Activated B cell treated with CpG ODN at 0.5 μM for 24 hours (primary cell): ENCODE measurements at regions of chrX and their contacts with region 1.

Region 1: GRCh38 chrX:111098874-111099273 is 2.9 kb downstream of the PAK3 start:
- DNase-seq: no peak
- ATAC-seq: peak; percentile 61
- H3K4me3 Mint-ChIP-seq: peak overlapping the region; percentile 60
- H3K27ac Mint-ChIP-seq: no peak overlapping the region
- H3K4me1 Mint-ChIP-seq: peaks cover 18% of the 10 kb centered on the region
- H3K27me3 Mint-ChIP-seq: peaks cover 9% of the 10 kb centered on the region
- CTCF ChIP-seq: no peak

Region 2: DNA sequence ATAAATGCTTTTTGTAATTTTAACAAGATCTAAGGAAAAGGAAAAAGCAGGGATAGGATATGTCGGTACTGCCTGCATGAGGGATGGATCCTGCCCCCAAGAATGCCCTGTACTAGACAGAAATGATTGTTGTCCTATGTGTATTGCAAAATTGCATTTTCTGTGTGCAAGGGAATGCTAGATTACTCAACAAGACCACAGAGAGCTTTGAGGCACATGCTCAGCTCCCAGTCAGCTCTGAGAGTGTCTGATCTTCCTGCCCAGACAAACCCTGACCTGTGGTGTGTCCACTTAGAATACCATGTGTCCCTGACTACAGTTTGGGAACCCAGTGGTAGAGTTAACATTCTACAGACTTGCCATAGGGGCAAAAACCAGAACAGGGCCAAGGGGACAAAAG is 132.0 kb before region 1 on chrX:
- CTCF ChIA-PET with region 1: no interaction called
- POLR2A ChIA-PET with region 1: no interaction called
- intact Hi-C with region 1: no loop called
- DNase-seq: no peak
- ATAC-seq: no peak
- H3K4me3 Mint-ChIP-seq: no peak overlapping the region
- H3K27ac Mint-ChIP-seq: no peak overlapping the region
- H3K4me1 Mint-ChIP-seq: no peaks in the 10 kb centered on the region
- H3K27me3 Mint-ChIP-seq: no peaks in the 10 kb centered on the region
- CTCF ChIP-seq: no peak

Region 3: DNA sequence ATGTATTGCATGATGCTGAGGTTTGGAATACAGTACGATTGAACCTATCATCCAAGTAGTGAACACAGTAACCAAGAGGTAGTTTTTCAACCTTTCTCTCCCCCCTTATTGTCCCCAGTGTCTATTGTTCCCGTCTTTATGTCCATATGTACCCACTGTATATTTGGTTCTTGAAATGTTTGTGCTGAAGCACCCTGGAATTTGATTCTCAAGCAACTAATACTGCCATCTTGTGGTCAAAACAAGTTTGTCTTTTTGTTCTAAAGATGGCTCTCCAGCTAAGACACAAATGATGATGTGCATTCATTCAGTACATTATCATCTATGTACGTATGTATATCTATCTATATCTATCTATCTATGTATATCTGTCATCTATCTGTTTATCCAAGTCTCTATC is 346.6 kb after region 1 on chrX:
- CTCF ChIA-PET with region 1: no interaction called
- POLR2A ChIA-PET with region 1: no interaction called
- intact Hi-C with region 1: loop called (anchors 5 kb)
- DNase-seq: no peak
- ATAC-seq: no peak
- H3K4me3 Mint-ChIP-seq: no peak overlapping the region
- H3K27ac Mint-ChIP-seq: no peak overlapping the region
- H3K4me1 Mint-ChIP-seq: no peaks in the 10 kb centered on the region
- H3K27me3 Mint-ChIP-seq: peaks cover 3% of the 10 kb centered on the region
- CTCF ChIP-seq: no peak